ENCODE measurements at regions of chr16 and their contacts with region 1.

Region 1: GRCh38 chr16:81737885-81738786 is 41.0 kb upstream of the PLCG2 start:
- DNase-seq: peak; percentile 69 to 92 (median 87)
- ATAC-seq: peak; percentile 96
- H3K4me3 ChIP-seq: peak overlapping the region; percentile 22 to 24
- H3K4me3 Mint-ChIP-seq: peak overlapping the region; percentile 76
- H3K27ac ChIP-seq: no peak overlapping the region
- H3K27ac Mint-ChIP-seq: no peak overlapping the region
- H3K4me1 ChIP-seq: peaks cover 6% of the 10 kb centered on the region
- H3K4me1 Mint-ChIP-seq: peaks cover 6% of the 10 kb centered on the region
- H3K27me3 ChIP-seq: no peaks in the 10 kb centered on the region
- H3K27me3 Mint-ChIP-seq: no peaks in the 10 kb centered on the region
- CTCF ChIP-seq: peak; percentile 85

Region 2: GRCh38 chr16:81035398-81035974 is 702.6 kb before region 1 on chr16 and contains the start of gene ATMIN:
- CTCF ChIA-PET with region 1: interaction called, 4 read pairs
- POLR2A ChIA-PET with region 1: no interaction called
- intact Hi-C with region 1: loop called (anchors 1 to 2 kb)
- DNase-seq: peak; percentile 79 to 94 (median 90)
- ATAC-seq: peak; percentile 97
- H3K4me3 ChIP-seq: peak within 1 kb of the TSS; percentile 47 to 59
- H3K4me3 Mint-ChIP-seq: peak within 1 kb of the TSS; percentile 87
- H3K27ac ChIP-seq: peak within 1 kb of the TSS in 1 of 2 experiments; percentile 34
- H3K27ac Mint-ChIP-seq: peak within 1 kb of the TSS; percentile 82
- H3K4me1 ChIP-seq: peaks cover 20% of the 10 kb centered on the region
- H3K4me1 Mint-ChIP-seq: peaks cover 34% of the 10 kb centered on the region
- H3K27me3 ChIP-seq: no peaks in the 10 kb centered on the region
- H3K27me3 Mint-ChIP-seq: no peaks in the 10 kb centered on the region
- CTCF ChIP-seq: peak; percentile 99
- total RNA-seq, gene ATMIN: 32.2 to 35.1 TPM

Region 3: GRCh38 chr16:81261049-81261648 is 477.0 kb before region 1 on chr16:
- CTCF ChIA-PET with region 1: interaction called, 10 read pairs
- POLR2A ChIA-PET with region 1: no interaction called
- intact Hi-C with region 1: loop called in 1 of 2 experiments (anchors 1 kb)
- DNase-seq: peak in 3 of 9 experiments; percentile 12 to 41 (median 36)
- ATAC-seq: no peak
- H3K4me3 ChIP-seq: no peak overlapping the region
- H3K4me3 Mint-ChIP-seq: no peak overlapping the region
- H3K27ac ChIP-seq: no peak overlapping the region
- H3K27ac Mint-ChIP-seq: no peak overlapping the region
- H3K4me1 ChIP-seq: no peaks in the 10 kb centered on the region
- H3K4me1 Mint-ChIP-seq: no peaks in the 10 kb centered on the region
- H3K27me3 ChIP-seq: no peaks in the 10 kb centered on the region
- H3K27me3 Mint-ChIP-seq: peaks cover 5% of the 10 kb centered on the region
- CTCF ChIP-seq: peak; percentile 58

Region 4: DNA sequence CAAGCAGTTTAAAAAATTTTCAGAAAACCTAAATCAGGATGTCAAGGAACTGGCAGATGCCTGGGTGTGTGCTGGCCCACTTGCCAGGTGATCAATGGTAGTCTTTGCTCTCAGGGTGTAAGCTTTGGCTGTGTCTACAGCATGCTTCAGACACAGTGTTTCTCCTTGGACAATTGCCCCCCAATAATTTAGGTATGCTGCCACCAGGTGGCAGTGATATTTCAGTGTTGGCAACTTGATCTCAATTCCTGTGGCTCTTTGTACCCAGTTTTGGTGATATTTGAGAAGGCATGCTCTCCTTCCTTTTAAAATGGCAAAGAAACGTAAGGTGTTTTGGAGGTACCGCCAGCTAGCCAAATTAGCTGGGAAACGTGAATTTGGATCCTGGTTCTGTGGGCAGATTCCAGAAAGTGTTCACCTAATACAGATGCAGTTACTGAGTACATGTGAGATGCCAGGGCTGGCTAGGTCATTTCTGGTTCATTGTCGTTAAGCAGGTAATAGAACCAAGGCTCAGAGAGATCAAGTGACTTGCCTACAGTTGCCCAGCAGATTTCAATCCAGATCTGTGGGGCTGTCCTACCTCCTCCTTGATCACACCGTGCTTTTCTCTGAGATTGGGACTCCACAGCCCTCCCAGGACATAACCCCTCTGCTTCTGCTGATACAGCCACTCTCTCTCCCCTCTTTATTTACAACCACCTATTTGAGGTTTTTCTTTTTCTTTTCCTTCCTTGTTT is 114.6 kb before region 1 on chr16:
- CTCF ChIA-PET with region 1: interaction called, 12 read pairs
- POLR2A ChIA-PET with region 1: no interaction called
- intact Hi-C with region 1: loop called in 1 of 2 experiments (anchors 1 kb)
- DNase-seq: peak; percentile 29 to 81 (median 68)
- ATAC-seq: peak; percentile 68
- H3K4me3 ChIP-seq: no peak overlapping the region
- H3K4me3 Mint-ChIP-seq: no peak overlapping the region
- H3K27ac ChIP-seq: no peak overlapping the region
- H3K27ac Mint-ChIP-seq: no peak overlapping the region
- H3K4me1 ChIP-seq: no peaks in the 10 kb centered on the region
- H3K4me1 Mint-ChIP-seq: peaks cover 4% of the 10 kb centered on the region
- H3K27me3 ChIP-seq: no peaks in the 10 kb centered on the region
- H3K27me3 Mint-ChIP-seq: no peaks in the 10 kb centered on the region
- CTCF ChIP-seq: peak; percentile 59

Region 5: GRCh38 chr16:82867485-82867884 is 1129.3 kb after region 1 on chr16:
- CTCF ChIA-PET with region 1: no interaction called
- POLR2A ChIA-PET with region 1: no interaction called
- intact Hi-C with region 1: no loop called
- DNase-seq: no peak
- ATAC-seq: no peak
- H3K4me3 ChIP-seq: no peak overlapping the region
- H3K4me3 Mint-ChIP-seq: no peak overlapping the region
- H3K27ac ChIP-seq: no peak overlapping the region
- H3K27ac Mint-ChIP-seq: no peak overlapping the region
- H3K4me1 ChIP-seq: no peaks in the 10 kb centered on the region
- H3K4me1 Mint-ChIP-seq: no peaks in the 10 kb centered on the region
- H3K27me3 ChIP-seq: no peaks in the 10 kb centered on the region
- H3K27me3 Mint-ChIP-seq: peaks cover 2% of the 10 kb centered on the region
- CTCF ChIP-seq: no peak

Measured in CD8-positive, alpha-beta T cell (primary cell).